ENCODE measurements at regions of chr7 and their contacts with region 1.

Region 1: GRCh38 chr7:43647673-43648472 is 65.0 kb downstream of the STK17A start:
- DNase-seq: peak; percentile 57
- H3K4me3 Mint-ChIP-seq: peak overlapping the region; percentile 73
- H3K27ac Mint-ChIP-seq: peak overlapping the region; percentile 98
- H3K4me1 Mint-ChIP-seq: peaks cover 93% of the 10 kb centered on the region
- H3K27me3 Mint-ChIP-seq: no peaks in the 10 kb centered on the region

Region 2: GRCh38 chr7:43554423-43554822 is 93.5 kb before region 1 on chr7:
- CTCF ChIA-PET with region 1: no interaction called
- POLR2A ChIA-PET with region 1: no interaction called
- DNase-seq: no peak
- H3K4me3 Mint-ChIP-seq: no peak overlapping the region
- H3K27ac Mint-ChIP-seq: no peak overlapping the region
- H3K4me1 Mint-ChIP-seq: peaks cover 18% of the 10 kb centered on the region
- H3K27me3 Mint-ChIP-seq: peaks cover 25% of the 10 kb centered on the region

Region 3: DNA sequence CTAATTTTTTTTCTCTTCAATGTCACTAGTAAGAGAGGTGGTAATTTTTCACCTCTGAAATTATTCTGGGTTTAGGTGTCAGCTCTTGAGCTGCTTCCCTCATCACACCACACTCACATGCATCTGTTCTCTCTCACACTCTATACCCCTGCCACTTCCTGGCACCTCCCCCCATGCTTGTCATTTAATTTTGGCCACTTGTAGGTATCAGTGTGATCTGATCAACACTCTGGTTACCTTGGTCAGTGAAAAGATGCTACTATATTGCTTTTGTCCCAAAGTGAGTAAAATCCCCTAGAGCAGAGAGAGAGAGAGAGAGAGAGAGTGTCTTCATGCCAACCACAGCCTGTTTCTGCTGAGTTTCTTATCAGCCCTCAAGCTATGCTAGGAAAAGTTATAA is 22.4 kb before region 1 on chr7:
- CTCF ChIA-PET with region 1: no interaction called
- POLR2A ChIA-PET with region 1: interaction called, 27 read pairs
- DNase-seq: peak; percentile 65
- H3K4me3 Mint-ChIP-seq: no peak overlapping the region
- H3K27ac Mint-ChIP-seq: peak overlapping the region; percentile 65
- H3K4me1 Mint-ChIP-seq: peaks cover 75% of the 10 kb centered on the region
- H3K27me3 Mint-ChIP-seq: no peaks in the 10 kb centered on the region

Region 4: GRCh38 chr7:43631559-43631958 is 16.3 kb before region 1 on chr7:
- CTCF ChIA-PET with region 1: no interaction called
- POLR2A ChIA-PET with region 1: interaction called, 27 read pairs
- DNase-seq: no peak
- H3K4me3 Mint-ChIP-seq: no peak overlapping the region
- H3K27ac Mint-ChIP-seq: no peak overlapping the region
- H3K4me1 Mint-ChIP-seq: peaks cover 53% of the 10 kb centered on the region
- H3K27me3 Mint-ChIP-seq: no peaks in the 10 kb centered on the region

Region 5: DNA sequence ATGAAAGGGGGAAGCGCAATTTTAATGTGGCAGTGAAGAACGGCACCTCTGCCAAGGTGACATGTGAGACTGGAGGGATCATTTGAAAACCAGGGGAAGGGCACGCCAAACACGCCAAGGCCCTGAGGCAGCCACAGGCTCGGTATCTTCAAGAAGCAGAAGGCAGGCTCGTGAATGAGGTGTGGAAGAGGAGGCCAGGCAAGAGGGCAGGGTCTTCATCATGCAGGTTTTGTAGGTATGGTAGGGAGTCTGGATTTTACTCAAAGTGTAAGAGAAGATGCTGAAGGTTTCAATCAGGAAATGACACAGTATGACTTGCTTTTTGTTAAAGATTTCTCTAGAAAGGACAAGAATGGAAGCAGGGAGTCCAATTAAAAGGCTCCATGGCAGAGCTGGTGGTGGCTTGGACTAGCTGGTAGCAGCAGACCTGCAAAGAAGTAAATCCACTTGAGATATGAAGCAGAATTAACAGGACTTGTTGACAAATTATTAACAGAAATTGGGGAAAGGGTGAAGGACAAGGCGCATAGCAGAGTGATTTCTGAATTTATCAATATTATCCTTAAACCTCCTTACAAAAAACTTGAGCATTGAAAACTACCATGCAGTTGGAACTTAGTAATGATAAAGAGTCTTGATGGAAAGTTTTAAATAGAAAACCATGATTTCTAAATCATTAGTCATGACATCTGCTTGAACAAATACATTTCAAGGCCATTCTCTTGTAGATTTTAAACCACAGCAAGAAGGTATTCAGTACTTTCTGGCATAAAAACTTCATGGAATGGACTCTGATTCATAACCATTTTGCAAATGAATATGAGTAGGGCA is 11.1 kb after region 1 on chr7:
- CTCF ChIA-PET with region 1: interaction called, 4 read pairs
- POLR2A ChIA-PET with region 1: interaction called, 20 read pairs
- DNase-seq: no peak
- H3K4me3 Mint-ChIP-seq: peak overlapping the region; percentile 36
- H3K27ac Mint-ChIP-seq: peak overlapping the region; percentile 89
- H3K4me1 Mint-ChIP-seq: peaks cover 54% of the 10 kb centered on the region
- H3K27me3 Mint-ChIP-seq: no peaks in the 10 kb centered on the region

Region 6: GRCh38 chr7:43669286-43670081 is 21.6 kb after region 1 on chr7:
- CTCF ChIA-PET with region 1: interaction called, 8 read pairs
- POLR2A ChIA-PET with region 1: interaction called, 50 read pairs
- DNase-seq: peak; percentile 81
- H3K4me3 Mint-ChIP-seq: peak overlapping the region; percentile 70
- H3K27ac Mint-ChIP-seq: peak overlapping the region; percentile 93
- H3K4me1 Mint-ChIP-seq: peaks cover 65% of the 10 kb centered on the region
- H3K27me3 Mint-ChIP-seq: no peaks in the 10 kb centered on the region